ENCODE measurements at regions of chrX and their contacts with region 1.

Region 1: GRCh38 chrX:54044126-54044876 is at the start of gene PHF8:
- DNase-seq: peak; percentile 96
- ATAC-seq: peak; percentile 78
- H3K4me3 ChIP-seq: peak within 1 kb of the TSS; percentile 83
- H3K27ac ChIP-seq: peak within 1 kb of the TSS; percentile 94
- H3K4me1 ChIP-seq: peaks cover 24% of the 10 kb centered on the region
- H3K27me3 ChIP-seq: no peaks in the 10 kb centered on the region
- CTCF ChIP-seq: no peak
- total RNA-seq, gene PHF8: 19.4 and 33.7 TPM in 2 replicates

Region 2: DNA sequence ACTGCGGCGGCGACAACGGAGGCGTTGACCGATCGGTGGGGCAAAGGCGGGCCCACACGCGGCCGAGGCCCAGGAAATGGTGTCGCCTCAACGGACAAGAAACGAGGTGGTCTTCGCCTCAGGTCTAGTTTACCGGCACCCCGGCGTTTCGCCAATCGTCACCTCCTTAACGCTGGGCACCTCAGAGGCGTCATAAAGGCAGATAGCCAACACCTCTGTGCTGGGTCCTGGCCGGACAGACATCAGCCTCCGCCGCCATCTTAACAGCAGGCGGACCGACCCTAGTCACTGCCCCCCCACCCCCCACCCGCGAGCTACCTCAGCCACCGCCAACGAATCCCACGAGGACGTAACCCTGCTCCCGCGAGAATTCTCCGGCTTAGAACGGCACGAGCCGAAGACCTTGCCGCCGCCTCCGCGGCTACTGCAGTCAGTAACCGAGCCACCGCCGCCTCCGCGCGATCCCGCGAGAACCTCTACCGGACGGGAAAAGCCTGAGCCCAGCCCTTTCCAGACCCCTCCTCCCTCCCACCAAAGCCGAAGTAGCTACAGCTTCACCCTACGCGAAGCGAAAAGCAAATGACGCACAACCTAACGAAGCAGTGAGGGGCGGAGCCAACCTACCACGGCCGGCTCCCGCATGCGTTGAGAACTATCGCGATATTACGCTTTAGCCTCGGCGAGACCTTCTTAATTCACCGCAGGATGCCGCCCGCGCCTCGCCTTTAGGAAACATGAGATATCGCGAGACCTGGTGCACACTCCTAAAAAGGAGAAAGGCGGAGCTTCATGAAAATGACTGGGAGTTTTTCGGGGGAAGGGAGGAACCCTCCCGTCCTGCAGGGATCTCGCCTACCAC is 360.5 kb before region 1 on chrX:
- CTCF ChIA-PET with region 1: no interaction called
- POLR2A ChIA-PET with region 1: interaction called, 6 read pairs
- intact Hi-C with region 1: loop called (anchors 5 kb)
- DNase-seq: peak; percentile 99
- ATAC-seq: peak; percentile 70
- H3K4me3 ChIP-seq: peak overlapping the region; percentile 96
- H3K27ac ChIP-seq: peak overlapping the region; percentile 87
- H3K4me1 ChIP-seq: peaks cover 17% of the 10 kb centered on the region
- H3K27me3 ChIP-seq: no peaks in the 10 kb centered on the region
- CTCF ChIP-seq: no peak

Region 3: DNA sequence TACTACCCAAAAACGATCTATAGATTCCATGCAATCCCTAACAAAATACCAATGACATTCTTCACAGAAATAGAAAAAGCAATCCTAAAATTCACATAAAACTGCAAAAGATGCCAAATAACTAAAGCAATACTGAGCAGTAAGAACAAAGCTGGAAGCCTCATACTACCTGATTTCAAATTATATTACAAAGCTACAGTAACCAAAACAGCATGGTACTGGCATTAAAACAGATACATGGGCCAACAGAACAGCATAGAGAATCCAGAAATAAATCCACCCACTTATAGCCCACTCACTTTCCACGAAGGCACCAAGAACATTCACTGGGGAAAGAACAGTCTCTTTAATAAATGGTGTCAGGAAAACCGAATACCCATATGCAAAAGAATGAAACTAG is 74.8 kb before region 1 on chrX:
- CTCF ChIA-PET with region 1: no interaction called
- POLR2A ChIA-PET with region 1: no interaction called
- intact Hi-C with region 1: no loop called
- DNase-seq: no peak
- ATAC-seq: no peak
- H3K4me3 ChIP-seq: no peak overlapping the region
- H3K27ac ChIP-seq: no peak overlapping the region
- H3K4me1 ChIP-seq: no peaks in the 10 kb centered on the region
- H3K27me3 ChIP-seq: no peaks in the 10 kb centered on the region
- CTCF ChIP-seq: no peak

Region 4: DNA sequence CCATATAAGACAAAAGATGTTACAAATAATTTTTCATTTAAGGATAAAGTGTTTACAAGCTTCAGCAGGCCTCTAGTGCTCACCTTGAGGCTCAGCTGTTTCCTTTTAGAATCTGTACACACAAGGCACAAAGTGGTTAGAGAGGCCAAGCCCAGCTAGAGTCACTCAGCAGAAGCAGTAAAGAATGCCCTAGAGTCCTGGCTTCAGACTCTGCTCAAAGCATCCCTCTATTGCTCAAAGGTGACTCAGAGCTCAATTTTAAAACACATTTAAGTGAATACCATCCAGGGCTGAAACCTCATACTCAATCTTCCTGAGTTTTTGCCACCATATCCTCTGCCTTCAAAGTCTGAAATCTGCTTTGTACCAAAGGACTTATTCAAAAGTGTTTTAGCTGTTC is 22.5 kb after region 1 on chrX:
- CTCF ChIA-PET with region 1: no interaction called
- POLR2A ChIA-PET with region 1: no interaction called
- intact Hi-C with region 1: no loop called
- DNase-seq: peak; percentile 39
- ATAC-seq: peak; percentile 71
- H3K4me3 ChIP-seq: no peak overlapping the region
- H3K27ac ChIP-seq: no peak overlapping the region
- H3K4me1 ChIP-seq: peaks cover 10% of the 10 kb centered on the region; the same call in 1 of the 2 replicates
- H3K27me3 ChIP-seq: no peaks in the 10 kb centered on the region
- CTCF ChIP-seq: no peak

Region 5: GRCh38 chrX:54178100-54178940 is 134.0 kb after region 1 on chrX:
- CTCF ChIA-PET with region 1: interaction called, 4 read pairs
- POLR2A ChIA-PET with region 1: interaction called, 6 read pairs
- intact Hi-C with region 1: loop called (anchors 2 kb)
- DNase-seq: peak; percentile 79
- ATAC-seq: peak; percentile 60
- H3K4me3 ChIP-seq: peak overlapping the region; percentile 92
- H3K27ac ChIP-seq: peak overlapping the region; percentile 44
- H3K4me1 ChIP-seq: peaks cover 54% of the 10 kb centered on the region
- H3K27me3 ChIP-seq: no peaks in the 10 kb centered on the region
- CTCF ChIP-seq: no peak

Region 6: GRCh38 chrX:54439967-54440871 is 395.9 kb after region 1 on chrX and contains the start of gene TSR2:
- CTCF ChIA-PET with region 1: interaction called, 3 read pairs
- POLR2A ChIA-PET with region 1: no interaction called
- intact Hi-C with region 1: loop called (anchors 2 kb)
- DNase-seq: peak; percentile 86
- ATAC-seq: peak; percentile 94
- H3K4me3 ChIP-seq: peak within 1 kb of the TSS; percentile 97
- H3K27ac ChIP-seq: no peak within 1 kb of the TSS
- H3K4me1 ChIP-seq: peaks cover 7% of the 10 kb centered on the region; the same call in 1 of the 2 replicates
- H3K27me3 ChIP-seq: no peaks in the 10 kb centered on the region
- CTCF ChIP-seq: peak; percentile 39; the same call in 1 of the 2 replicates
- total RNA-seq, gene TSR2: 38.6 and 44.6 TPM in 2 replicates

Region 7: GRCh38 chrX:54999717-55000598 is 955.7 kb after region 1 on chrX and contains the start of gene APEX2:
- CTCF ChIA-PET with region 1: no interaction called
- POLR2A ChIA-PET with region 1: no interaction called
- intact Hi-C with region 1: loop called (anchors 10 kb)
- DNase-seq: peak; percentile 94
- ATAC-seq: peak; percentile 91
- H3K4me3 ChIP-seq: peak within 1 kb of the TSS; percentile 91
- H3K27ac ChIP-seq: peak within 1 kb of the TSS; percentile 95
- H3K4me1 ChIP-seq: peaks cover 44% of the 10 kb centered on the region
- H3K27me3 ChIP-seq: no peaks in the 10 kb centered on the region
- CTCF ChIP-seq: no peak
- total RNA-seq, gene APEX2: 24.7 and 30.9 TPM in 2 replicates